Endothelial cell of umbilical vein (primary cell): ENCODE measurements at regions of chr11 and their contacts with region 1.

Region 1: GRCh38 chr11:124793466-124794278 is 6.5 kb downstream of the MSANTD2 start:
- DNase-seq: peak; percentile 70
- H3K4me3 ChIP-seq: no peak overlapping the region
- H3K27ac ChIP-seq: no peak overlapping the region
- H3K4me1 ChIP-seq: peaks cover 9% of the 10 kb centered on the region
- H3K27me3 ChIP-seq: no peaks in the 10 kb centered on the region
- CTCF ChIP-seq: peak; percentile 64
- POLR2A ChIP-seq: no peak

Region 2: GRCh38 chr11:124315052-124315451 is 478.6 kb before region 1 on chr11:
- CTCF ChIA-PET with region 1: no interaction called
- POLR2A ChIA-PET with region 1: no interaction called
- dilution Hi-C with region 1: no loop called
- intact Hi-C with region 1: no loop called
- DNase-seq: peak; percentile 79
- H3K4me3 ChIP-seq: no peak overlapping the region
- H3K27ac ChIP-seq: no peak overlapping the region
- H3K4me1 ChIP-seq: peaks cover 6% of the 10 kb centered on the region
- H3K27me3 ChIP-seq: peaks cover 0 to 2% of the 10 kb centered on the region in 2 experiments
- CTCF ChIP-seq: no peak
- POLR2A ChIP-seq: no peak

Region 3: DNA sequence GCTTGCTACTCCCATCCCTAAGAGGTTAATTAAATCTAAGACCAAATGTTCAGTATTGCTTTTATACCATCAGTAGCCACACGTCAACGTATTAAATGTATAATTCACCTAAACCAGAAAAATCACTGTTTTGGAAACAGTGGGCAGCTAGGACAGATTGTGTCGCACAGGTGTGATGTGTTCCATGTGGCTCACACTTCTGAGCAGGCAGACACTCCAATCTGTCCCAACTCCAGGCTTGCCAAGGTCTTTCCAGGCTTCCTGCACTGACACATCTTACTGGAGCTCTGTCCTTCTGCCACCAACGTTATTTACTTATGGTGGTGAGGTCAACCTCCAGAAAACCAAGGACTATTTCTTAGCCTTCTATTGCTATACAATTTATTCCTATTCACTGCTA is 131.6 kb before region 1 on chr11:
- CTCF ChIA-PET with region 1: interaction called, 12 read pairs
- POLR2A ChIA-PET with region 1: no interaction called
- dilution Hi-C with region 1: no loop called
- intact Hi-C with region 1: no loop called
- DNase-seq: no peak
- H3K4me3 ChIP-seq: no peak overlapping the region
- H3K27ac ChIP-seq: no peak overlapping the region
- H3K4me1 ChIP-seq: no peaks in the 10 kb centered on the region
- H3K27me3 ChIP-seq: no peaks in the 10 kb centered on the region
- CTCF ChIP-seq: no peak
- POLR2A ChIP-seq: no peak

Region 4: GRCh38 chr11:124753205-124753604 is 40.5 kb before region 1 on chr11:
- CTCF ChIA-PET with region 1: interaction called, 24 read pairs
- POLR2A ChIA-PET with region 1: no interaction called
- dilution Hi-C with region 1: no loop called
- intact Hi-C with region 1: no loop called
- DNase-seq: no peak
- H3K4me3 ChIP-seq: no peak overlapping the region
- H3K27ac ChIP-seq: peak overlapping the region; percentile 28
- H3K4me1 ChIP-seq: peaks cover 77% of the 10 kb centered on the region
- H3K27me3 ChIP-seq: no peaks in the 10 kb centered on the region
- CTCF ChIP-seq: no peak
- POLR2A ChIP-seq: no peak

Region 5: DNA sequence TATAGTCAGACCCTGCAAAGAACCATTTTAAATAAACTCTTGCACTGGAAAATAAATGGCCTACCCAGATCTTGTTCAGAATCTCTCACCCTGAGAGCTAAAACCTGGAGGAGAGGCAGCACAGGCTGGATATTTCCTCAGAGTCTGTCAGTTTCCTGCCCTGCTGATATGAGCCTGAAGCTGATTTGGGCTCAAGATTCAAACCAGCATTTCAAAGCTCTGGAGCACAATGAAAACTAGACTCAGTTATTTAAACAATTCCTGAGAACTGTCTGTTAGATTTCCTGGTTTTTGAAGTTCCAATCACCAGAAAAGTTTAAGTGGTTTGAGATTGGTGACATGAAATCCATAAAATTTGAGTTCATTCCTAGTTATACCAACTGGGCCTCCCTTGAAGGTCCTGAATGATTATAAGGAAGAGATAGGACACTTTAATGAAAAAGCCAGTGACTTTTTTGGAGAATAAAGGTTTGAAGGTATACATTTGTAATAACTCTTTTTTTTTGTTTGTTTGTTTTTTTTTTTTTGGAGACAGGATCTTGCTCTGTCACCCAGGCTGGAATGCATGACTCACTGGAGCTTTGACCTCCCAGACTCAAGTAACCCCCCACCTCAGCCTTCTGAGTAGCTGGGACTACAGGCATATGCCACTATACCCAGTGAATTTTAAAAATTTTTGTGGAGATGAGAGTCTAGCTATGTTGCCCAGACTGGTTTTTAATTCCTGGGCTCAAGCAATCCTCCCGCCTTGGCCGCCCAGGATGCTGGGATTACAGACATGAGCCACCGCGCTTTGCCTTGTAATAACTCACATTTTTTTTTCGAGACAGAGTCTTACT is 23.7 kb before region 1 on chr11:
- CTCF ChIA-PET with region 1: interaction called, 88 read pairs
- POLR2A ChIA-PET with region 1: interaction called, 5 read pairs
- dilution Hi-C with region 1: no loop called
- intact Hi-C with region 1: no loop called
- DNase-seq: peak; percentile 72
- H3K4me3 ChIP-seq: no peak overlapping the region
- H3K27ac ChIP-seq: peak overlapping the region; percentile 86
- H3K4me1 ChIP-seq: peaks cover 34% of the 10 kb centered on the region
- H3K27me3 ChIP-seq: no peaks in the 10 kb centered on the region
- CTCF ChIP-seq: no peak
- POLR2A ChIP-seq: peak; percentile 41

Region 6: DNA sequence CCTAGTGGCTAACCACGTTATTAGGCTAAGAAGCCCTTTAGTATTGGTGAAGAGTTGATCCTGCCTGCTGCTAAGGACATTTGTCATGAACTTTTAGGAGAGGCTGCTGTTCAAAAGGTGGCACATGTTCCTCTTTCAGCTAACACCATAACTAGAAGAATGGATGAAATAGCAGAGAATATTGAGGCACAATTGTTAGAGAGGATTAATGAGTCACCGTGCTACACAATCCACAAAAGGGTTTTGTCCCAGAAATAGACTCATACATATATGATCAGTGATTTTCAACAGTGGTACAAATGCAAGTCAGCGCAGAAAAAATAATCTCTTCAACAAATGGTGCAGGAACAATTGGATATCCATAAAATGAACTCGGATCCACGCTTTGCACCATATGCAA is 13.5 kb after region 1 on chr11:
- CTCF ChIA-PET with region 1: interaction called, 15 read pairs
- POLR2A ChIA-PET with region 1: no interaction called
- dilution Hi-C with region 1: no loop called
- intact Hi-C with region 1: no loop called
- DNase-seq: no peak
- H3K4me3 ChIP-seq: no peak overlapping the region
- H3K27ac ChIP-seq: no peak overlapping the region
- H3K4me1 ChIP-seq: no peaks in the 10 kb centered on the region
- H3K27me3 ChIP-seq: no peaks in the 10 kb centered on the region
- CTCF ChIP-seq: no peak
- POLR2A ChIP-seq: no peak